IMR-90 (cell line): ENCODE measurements at regions of chr10 and their contacts with region 1.

Region 1: GRCh38 chr10:78021201-78021600 is 8.1 kb downstream of the POLR3A start:
- DNase-seq: no peak
- ATAC-seq: no peak
- H3K4me3 ChIP-seq: no peak overlapping the region
- H3K27ac ChIP-seq: no peak overlapping the region
- H3K4me1 ChIP-seq: peaks cover 5% of the 10 kb centered on the region
- H3K27me3 ChIP-seq: no peaks in the 10 kb centered on the region
- CTCF ChIP-seq: no peak
- POLR2A ChIP-seq: no peak
- RAD21 ChIP-seq: no peak

Region 2: DNA sequence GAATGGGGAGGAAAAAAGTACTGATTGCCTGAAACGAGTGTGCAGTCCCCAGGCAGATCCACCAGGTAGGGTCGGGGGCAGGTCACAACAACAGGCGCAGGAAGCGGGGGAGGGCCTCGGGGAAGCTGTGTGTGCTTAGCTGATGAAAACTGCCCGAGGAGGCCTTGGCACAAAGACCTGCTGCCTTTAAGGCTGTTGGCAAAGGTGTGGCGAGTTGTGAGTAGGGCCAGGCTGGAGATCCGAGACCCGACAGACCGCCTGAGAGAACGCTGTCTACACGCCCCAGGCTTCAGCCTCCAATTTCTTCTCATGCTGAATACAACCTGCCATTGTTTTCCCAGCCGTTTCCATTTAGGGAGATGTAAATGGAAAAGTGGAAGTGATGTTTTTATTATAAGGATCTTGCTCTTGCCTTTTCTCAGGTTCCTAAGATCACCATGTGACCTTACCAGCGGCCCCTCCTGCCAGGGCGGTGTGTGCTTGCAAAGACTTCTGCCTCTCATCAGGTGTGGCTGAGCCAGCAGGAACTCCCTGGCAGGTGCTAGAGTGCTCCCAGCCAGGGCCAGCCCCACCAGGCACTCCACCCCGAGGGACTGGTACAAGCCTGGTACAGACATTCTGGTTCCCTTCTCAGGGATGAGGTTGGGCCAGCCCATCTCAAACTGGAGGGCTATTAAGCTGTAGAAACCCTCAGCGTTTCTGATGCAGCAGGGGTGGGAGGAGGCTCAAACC is 155.4 kb before region 1 on chr10:
- CTCF ChIA-PET with region 1: no interaction called
- POLR2A ChIA-PET with region 1: no interaction called
- dilution Hi-C with region 1: no loop called
- in situ Hi-C with region 1: no loop called
- intact Hi-C with region 1: no loop called
- DNase-seq: no peak
- ATAC-seq: no peak
- H3K4me3 ChIP-seq: no peak overlapping the region
- H3K27ac ChIP-seq: no peak overlapping the region
- H3K4me1 ChIP-seq: peaks cover 7% of the 10 kb centered on the region; the same call in 1 of the 2 replicates
- H3K27me3 ChIP-seq: no peaks in the 10 kb centered on the region
- CTCF ChIP-seq: no peak
- POLR2A ChIP-seq: no peak
- RAD21 ChIP-seq: no peak

Region 3: GRCh38 chr10:77983384-77984341 is 37.5 kb before region 1 on chr10:
- CTCF ChIA-PET with region 1: no interaction called
- POLR2A ChIA-PET with region 1: no interaction called
- dilution Hi-C with region 1: no loop called
- in situ Hi-C with region 1: loop called (anchors 5 kb)
- intact Hi-C with region 1: loop called (anchors 5 kb)
- DNase-seq: peak; percentile 68
- ATAC-seq: peak; percentile 79
- H3K4me3 ChIP-seq: no peak overlapping the region
- H3K27ac ChIP-seq: no peak overlapping the region
- H3K4me1 ChIP-seq: peaks cover 3% of the 10 kb centered on the region; the same call in 1 of the 2 replicates
- H3K27me3 ChIP-seq: no peaks in the 10 kb centered on the region
- CTCF ChIP-seq: no peak
- POLR2A ChIP-seq: no peak
- RAD21 ChIP-seq: no peak

Region 4: GRCh38 chr10:77989081-77989724 is 32.0 kb before region 1 on chr10:
- CTCF ChIA-PET with region 1: no interaction called
- POLR2A ChIA-PET with region 1: no interaction called
- dilution Hi-C with region 1: no loop called
- in situ Hi-C with region 1: loop called (anchors 5 kb)
- intact Hi-C with region 1: loop called (anchors 5 kb)
- DNase-seq: peak; percentile 22
- ATAC-seq: no peak; the same call in 1 of the 2 replicates
- H3K4me3 ChIP-seq: no peak overlapping the region
- H3K27ac ChIP-seq: no peak overlapping the region
- H3K4me1 ChIP-seq: no peaks in the 10 kb centered on the region
- H3K27me3 ChIP-seq: no peaks in the 10 kb centered on the region
- CTCF ChIP-seq: no peak
- POLR2A ChIP-seq: no peak
- RAD21 ChIP-seq: no peak